ENCODE measurements at regions of chr3 and their contacts with region 1.

Region 1: DNA sequence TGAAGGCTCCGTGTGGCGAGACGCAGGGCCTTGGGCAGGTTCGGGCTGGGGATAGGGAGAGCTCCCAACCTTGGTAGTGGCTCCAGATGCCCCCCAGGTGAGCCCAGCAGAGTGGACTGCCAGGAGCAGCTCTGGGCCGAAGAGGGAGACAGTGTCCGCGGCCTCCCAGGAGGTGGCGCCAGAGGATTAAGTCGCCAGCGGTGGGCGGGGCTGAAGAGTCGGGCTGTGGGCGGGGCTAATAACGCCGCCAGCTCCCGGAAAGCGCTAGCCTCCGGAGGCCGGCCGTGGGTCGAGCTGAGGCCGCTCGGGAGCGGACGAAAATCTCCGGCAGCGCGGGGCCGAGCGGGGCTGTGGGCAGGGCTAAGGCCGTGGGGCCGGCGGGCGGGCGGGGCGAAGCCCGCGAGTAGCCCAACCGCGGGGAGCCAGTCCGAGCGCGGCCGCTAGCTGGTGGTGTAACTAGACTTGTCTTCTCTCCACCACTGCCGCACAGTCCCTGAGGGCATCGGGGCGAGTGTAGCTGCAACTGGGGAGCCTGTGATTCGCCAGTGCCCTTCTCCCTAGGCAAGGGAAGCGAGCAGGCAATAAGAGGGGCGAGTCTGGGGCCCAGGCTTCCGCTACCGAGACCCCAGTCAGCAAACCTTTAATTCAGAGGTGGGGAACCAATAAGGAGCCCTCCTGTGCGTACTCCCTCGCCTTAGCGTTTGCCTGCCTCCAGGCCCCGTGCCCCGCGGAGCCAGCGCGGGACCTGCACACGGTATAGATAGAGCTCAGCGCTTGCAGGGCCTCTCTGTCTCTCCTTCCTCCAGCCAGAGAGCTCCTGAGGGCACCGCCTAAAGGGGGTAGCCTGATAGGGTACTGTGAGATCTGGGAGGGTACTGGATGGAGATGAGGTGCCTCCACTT is 14.4 kb upstream of the BSN start:
- DNase-seq: peak; percentile 97
- ATAC-seq: peak; percentile 85
- H3K4me3 Mint-ChIP-seq: peak overlapping the region; percentile 79
- H3K27ac Mint-ChIP-seq: no peak overlapping the region
- H3K4me1 Mint-ChIP-seq: peaks cover 5% of the 10 kb centered on the region
- H3K27me3 Mint-ChIP-seq: peaks cover 24% of the 10 kb centered on the region

Region 2: DNA sequence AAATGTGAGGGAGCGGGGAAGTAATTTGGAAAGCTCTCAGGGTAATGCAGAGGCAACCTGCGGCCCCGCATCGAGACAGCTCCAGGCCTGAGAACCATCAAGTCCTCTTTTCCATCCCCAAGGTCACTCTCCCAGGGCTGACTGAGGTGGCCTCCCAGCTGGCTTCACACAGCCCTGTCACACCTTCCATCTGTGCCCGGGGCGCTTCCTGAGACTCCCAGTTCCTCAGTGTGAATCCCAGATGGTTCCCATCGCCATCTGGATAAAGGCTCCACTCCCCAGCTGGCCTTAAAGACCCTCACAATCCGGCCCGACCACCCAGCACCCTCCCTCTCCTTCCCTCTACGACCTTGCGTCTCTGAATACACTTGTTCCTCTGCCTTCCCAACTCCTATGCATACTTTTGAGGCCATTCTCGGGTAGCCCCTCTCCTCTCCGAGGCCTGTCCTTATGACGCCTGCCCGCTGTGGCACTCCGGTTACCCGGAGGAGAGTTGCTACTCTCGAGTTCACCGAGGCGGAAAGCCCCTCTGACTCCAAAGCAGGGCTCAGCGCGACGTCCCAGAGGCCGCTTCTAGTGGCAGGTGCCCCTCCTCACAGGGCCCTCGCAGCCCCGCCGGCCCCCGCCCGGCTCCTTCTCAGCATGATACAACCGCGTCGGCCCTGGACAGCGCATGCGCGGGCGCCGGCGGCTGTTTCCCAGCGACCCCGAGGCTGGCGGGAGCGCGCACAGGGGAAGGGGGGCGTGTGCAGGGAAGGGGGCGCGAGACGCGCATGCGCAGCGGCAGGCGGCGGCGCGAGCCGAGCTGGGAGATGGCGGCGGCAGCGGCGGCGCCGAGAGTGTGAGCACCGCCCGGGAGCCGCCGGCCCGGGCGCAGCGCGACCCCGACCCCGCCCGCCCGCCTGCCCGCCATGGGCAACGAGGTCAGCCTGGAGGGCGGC is 14.1 kb after region 1 on chr3 and contains the start of gene BSN:
- POLR2A ChIA-PET with region 1: interaction called, 10 read pairs
- DNase-seq: peak; percentile 96
- ATAC-seq: peak; percentile 84
- H3K4me3 Mint-ChIP-seq: peak within 1 kb of the TSS; percentile 88
- H3K27ac Mint-ChIP-seq: peak within 1 kb of the TSS; percentile 51
- H3K4me1 Mint-ChIP-seq: peaks cover 17% of the 10 kb centered on the region
- H3K27me3 Mint-ChIP-seq: peaks cover 33% of the 10 kb centered on the region
- total RNA-seq, gene BSN: 0.08 to 0.14 TPM

Region 3: GRCh38 chr3:49582177-49582576 is 42.3 kb after region 1 on chr3:
- POLR2A ChIA-PET with region 1: no interaction called
- DNase-seq: no peak
- ATAC-seq: no peak
- H3K4me3 Mint-ChIP-seq: no peak overlapping the region
- H3K27ac Mint-ChIP-seq: no peak overlapping the region
- H3K4me1 Mint-ChIP-seq: no peaks in the 10 kb centered on the region
- H3K27me3 Mint-ChIP-seq: peaks cover 30% of the 10 kb centered on the region

Region 4: DNA sequence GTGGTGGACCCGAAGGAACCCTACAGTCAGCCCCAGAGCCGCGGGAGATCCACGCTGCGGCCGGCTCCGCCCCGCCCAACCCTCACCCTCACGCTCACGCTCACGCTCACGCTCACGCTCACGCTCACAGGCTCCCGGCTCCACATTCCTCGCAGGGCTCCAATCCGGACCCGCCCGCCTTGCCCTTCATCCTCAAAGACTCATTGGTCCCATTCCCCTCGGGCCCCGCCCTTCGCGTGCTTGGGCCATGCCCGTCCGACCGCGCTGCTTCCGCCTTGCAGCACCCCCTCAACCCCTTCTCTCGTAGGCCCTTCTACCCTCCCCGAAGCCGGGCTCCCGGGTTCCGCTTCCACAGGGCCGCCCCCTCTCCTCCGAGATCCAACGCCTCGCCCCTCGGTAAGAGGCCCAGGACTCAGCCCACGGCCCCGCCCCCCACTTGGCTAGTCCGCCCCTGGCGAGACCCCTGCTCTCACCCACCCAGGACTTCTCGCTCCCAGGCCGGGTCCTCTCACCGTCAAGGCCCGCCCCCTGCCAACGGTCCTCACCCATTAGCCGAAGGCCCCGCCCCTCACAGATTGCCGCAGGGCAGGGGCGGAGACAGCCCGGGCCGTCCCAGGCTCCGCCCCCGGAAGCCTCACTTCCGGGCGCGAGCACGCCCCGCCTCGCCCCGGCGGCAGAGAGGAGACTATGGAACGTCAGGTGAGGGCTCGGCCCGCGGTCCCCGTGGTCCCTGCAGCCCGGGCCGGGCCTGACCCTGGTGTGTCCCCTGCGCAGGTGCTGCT is 134.0 kb after region 1 on chr3 and contains the start of gene APEH:
- POLR2A ChIA-PET with region 1: interaction called, 46 read pairs
- DNase-seq: peak; percentile 99
- ATAC-seq: peak; percentile 85
- H3K4me3 Mint-ChIP-seq: peak within 1 kb of the TSS; percentile 95
- H3K27ac Mint-ChIP-seq: peak within 1 kb of the TSS; percentile 99
- H3K4me1 Mint-ChIP-seq: peaks cover 22% of the 10 kb centered on the region
- H3K27me3 Mint-ChIP-seq: no peaks in the 10 kb centered on the region
- total RNA-seq, gene APEH: 148 to 165 TPM

Measured in activated naive CD8-positive, alpha-beta T cell treated with anti-CD3 and anti-CD28 coated beads, Interleukin-2, amount 10 ng/mL, durations not matched to agents 7 days and 5 days (primary cell).